ENCODE measurements at regions of chr7 and their contacts with region 1.

Region 1: GRCh38 chr7:107387128-107387527 is 82.7 kb upstream of the GPR22 start:
- DNase-seq: no peak
- CTCF ChIP-seq: no peak

Region 2: DNA sequence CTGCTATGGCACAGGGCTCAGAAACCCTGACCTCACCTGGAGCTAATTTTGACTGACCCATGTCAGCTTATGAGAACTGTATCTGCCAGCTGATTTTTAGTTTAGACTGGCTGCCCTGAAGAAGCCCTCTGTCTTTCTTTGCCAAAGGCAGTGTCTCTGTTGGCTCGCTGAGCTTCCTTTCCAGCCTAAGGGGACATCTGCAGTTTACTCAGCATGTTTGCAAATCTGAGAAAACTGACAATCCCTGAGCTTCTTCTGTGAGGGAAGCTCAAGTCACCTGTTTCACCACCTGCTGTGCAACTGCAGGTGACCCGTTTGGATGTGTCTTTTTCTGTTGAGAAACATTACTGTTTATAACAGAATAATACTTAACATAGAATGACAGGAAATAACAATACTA is 296.7 kb before region 1 on chr7:
- CTCF ChIA-PET with region 1: no interaction called
- POLR2A ChIA-PET with region 1: no interaction called
- DNase-seq: no peak
- CTCF ChIP-seq: no peak

Region 3: DNA sequence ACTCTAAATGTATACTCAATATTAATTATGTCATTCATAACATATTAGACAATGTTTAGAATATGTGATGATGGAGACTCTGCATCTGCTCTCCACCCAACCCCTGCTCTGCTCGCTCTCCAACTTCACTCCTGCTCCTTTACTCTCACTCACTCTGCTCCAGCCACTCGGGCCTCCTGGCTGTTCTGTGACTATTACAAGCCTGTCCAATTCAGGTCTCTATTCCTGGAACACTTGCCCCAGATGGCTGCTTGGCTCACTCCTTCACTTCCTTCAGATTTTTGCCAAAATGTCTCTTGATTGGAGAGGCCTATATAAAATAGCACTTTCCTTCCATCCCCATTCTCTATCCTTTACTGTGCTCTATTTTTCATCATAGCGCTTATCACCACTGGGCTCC is 133.5 kb before region 1 on chr7:
- CTCF ChIA-PET with region 1: no interaction called
- POLR2A ChIA-PET with region 1: no interaction called
- DNase-seq: no peak
- CTCF ChIP-seq: no peak

Region 4: DNA sequence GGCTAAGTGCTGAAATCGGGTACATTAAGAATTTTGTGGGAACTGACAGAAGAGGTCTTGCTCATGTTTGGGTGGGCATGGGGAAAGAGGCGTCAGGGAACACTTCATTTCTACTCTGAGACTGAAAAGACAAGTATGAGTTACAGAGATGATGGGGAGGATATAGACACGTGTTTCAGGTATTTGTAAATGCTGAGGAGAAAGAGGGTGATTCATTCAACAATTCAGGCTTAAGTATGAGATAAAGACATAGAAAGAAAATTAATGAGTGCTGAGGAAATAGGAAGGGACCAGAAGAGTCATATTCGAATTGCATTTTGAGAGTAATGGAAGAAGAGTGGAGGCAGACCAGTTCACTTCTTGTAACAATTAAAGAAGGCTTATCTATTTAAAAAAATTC is 74.7 kb before region 1 on chr7:
- CTCF ChIA-PET with region 1: no interaction called
- POLR2A ChIA-PET with region 1: no interaction called
- DNase-seq: no peak
- CTCF ChIP-seq: no peak

Region 5: DNA sequence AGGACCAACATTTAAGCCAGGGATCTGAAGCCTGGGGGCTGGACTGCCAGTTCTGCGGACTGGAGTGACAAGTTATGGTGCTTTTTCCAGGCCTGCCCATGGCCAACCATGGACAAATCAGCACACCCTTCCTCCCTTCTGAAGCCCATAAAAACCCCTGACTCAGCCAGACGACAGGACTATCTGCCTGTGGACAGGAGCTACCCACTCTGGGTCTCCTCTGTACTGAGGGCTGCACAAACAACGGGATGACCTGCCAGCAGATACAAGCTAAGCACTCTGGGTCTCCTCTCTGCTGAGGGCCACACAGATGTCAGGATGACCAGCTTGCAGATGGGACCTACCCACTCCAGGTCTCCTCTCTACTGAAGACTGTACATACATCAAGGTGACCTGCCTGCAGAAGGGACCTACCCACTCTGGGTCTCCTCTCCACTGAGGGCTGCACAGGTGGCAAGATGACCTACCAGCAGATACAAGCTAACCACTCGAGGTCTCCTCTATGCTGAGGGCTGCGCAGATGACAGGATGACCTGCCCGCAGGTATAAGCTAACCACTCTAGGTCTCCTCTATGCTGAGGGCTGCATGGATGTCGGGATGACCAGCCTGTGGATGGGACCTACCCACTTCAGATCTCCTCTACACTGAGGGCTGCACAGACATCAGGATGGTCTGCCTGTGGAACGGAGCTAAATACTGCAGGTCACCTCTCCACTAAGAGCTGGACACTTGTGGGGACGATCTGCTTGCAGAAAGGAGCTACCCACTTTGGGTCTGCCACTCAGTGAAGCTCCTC is 27.4 kb before region 1 on chr7:
- CTCF ChIA-PET with region 1: no interaction called
- POLR2A ChIA-PET with region 1: no interaction called
- DNase-seq: no peak
- CTCF ChIP-seq: no peak

Region 6: DNA sequence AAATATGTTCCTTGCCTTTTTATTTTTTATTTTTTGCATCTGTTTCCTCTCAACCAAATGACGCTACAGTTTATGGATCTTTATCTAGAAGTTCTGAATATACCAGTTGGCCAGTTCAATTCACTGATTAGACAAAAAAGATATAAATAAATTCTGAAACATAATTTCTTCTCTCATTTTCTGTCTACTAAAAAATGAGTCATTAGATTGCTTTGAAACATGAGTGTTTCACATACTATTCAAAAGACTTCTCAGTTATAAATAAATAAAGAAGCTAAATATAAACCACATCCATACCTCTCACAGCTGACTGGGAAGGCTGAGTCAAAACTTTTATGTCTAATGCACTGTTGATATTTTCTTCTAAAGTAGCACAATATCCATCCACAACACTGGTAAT is 14.8 kb before region 1 on chr7:
- CTCF ChIA-PET with region 1: interaction called, 10 read pairs
- POLR2A ChIA-PET with region 1: no interaction called
- DNase-seq: no peak
- CTCF ChIP-seq: no peak

Measured in GM10248 (cell line).